Tibial artery (tissue), 4 donors: ENCODE measurements at regions of chr12 and their contacts with region 1.

Region 1: GRCh38 chr12:116737774-116738700 is at the starts of genes RNFT2 and SPRING1:
- DNase-seq: peak; percentile 99 to 100
- H3K4me3 ChIP-seq: peak within 1 kb of the TSS; percentile 94 to 96
- H3K27ac ChIP-seq: peak within 1 kb of the TSS; percentile 73 to 79
- H3K4me1 ChIP-seq: peaks cover 5 to 18% (median 11%) of the 10 kb centered on the region in 4 donors
- H3K27me3 ChIP-seq: no peaks in the 10 kb centered on the region
- CTCF ChIP-seq: peak in 1 of 2 experiments; percentile 13

Region 2: DNA sequence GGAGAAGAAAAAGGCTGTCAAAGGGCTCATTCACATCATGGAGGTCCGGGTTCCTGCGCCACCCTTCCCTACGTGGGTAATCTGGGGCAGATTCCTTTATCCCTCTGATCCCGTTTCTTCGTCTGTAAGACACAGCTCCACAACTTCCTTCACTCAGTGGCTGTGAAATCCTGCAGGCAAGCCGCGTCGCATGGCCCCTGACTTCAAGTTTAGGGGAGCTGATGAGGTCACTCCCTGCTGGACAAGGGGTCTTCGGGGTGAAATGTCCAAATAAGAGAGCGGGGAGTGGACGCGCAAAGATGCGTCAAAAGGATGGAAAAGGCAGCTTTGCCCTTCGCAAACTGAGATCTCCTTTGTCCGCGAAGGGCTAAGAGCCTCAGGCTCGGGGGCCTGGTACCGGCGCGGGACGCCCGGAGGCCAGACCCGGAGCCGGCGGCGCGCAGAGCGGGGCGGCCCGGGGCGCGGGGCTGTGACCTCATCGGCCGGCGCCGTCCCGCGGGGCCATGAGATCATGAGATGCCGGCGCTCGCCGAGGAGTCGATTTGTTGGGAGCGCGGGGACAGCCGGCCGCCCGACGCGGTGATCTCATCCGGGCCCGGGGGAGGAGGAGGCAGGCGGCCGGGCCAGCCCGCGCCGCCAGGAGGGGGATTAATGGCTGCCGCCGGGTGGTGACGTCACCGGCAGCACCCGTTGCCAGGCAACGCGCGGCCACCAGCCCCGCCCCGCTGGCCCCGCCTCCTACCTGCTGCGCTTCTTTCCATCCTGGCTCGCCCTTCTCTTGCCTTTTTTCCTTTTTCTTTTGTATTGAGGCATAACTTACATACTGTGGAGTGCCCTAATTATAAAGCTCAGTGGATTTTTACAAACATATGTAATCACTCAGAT is 81.2 kb after region 1 on chr12:
- intact Hi-C with region 1: loop called (anchors 10 kb)
- DNase-seq: peak; percentile 89 to 97
- H3K4me3 ChIP-seq: peak overlapping the region; percentile 64 to 93
- H3K27ac ChIP-seq: peak overlapping the region; percentile 92 to 96
- H3K4me1 ChIP-seq: peaks cover 0 to 9% (median 6%) of the 10 kb centered on the region in 4 donors
- H3K27me3 ChIP-seq: no peaks in the 10 kb centered on the region
- CTCF ChIP-seq: peak in 1 of 2 experiments; percentile 24

Region 3: GRCh38 chr12:116861320-116861719 is 123.3 kb after region 1 on chr12:
- intact Hi-C with region 1: loop called (anchors 10 kb)
- DNase-seq: peak; percentile 29 to 80
- H3K4me3 ChIP-seq: peak overlapping the region; percentile 7 to 16
- H3K27ac ChIP-seq: peak overlapping the region; percentile 9 to 24
- H3K4me1 ChIP-seq: peaks cover 0 to 44% (median 30%) of the 10 kb centered on the region in 4 donors
- H3K27me3 ChIP-seq: peaks cover 0 to 5% of the 10 kb centered on the region in 2 donors
- CTCF ChIP-seq: no peak